ENCODE measurements at regions of chr5 and their contacts with region 1.

Region 1: DNA sequence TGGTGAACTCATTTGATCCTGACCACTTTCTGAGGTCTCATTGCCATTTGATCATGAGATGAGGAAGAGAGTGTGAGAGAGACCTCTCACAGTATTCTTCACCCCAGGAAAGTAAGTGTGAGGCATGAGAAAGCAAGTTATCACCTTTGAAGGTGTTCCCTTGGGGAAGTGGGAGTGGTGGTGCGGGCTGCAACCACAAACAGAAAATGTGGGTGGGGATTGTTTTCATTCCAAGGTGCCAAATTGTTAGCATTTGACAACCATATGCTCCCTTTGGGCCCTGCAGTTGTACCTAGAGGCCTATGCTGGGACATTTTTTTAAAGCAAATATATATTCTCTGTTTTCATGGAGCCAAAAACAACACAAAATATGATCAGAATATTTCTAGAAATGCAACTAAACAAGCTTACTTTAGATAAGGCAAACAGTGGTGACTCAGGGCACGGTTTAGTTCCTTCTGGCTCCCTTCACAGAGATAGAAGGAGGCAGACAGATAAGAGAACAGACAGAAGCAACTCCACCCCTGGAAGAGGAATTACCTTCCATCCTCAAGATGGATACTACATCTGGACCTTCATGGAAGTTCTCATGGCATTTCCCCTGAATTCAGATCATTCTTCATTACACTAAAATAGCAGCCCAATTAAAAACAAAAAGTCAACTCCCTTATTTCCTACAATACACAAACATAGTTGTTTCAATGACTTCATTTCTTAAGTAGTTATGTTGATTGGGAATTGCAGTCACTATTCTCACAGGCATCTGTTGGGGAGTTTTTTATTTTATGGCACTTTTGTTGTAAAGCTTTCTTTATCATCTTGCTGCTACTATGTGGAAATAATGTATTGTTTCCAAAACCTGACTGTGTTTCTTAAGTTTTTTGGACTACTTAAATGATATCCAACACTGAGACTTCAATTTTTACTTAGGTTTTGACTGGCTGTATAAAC is 416.6 kb downstream of the PLK2 start:
- DNase-seq: no peak
- ATAC-seq: no peak
- H3K4me3 ChIP-seq: no peak overlapping the region
- H3K4me3 Mint-ChIP-seq: no peak overlapping the region
- H3K27ac ChIP-seq: no peak overlapping the region
- H3K27ac Mint-ChIP-seq: no peak overlapping the region
- H3K4me1 ChIP-seq: no peaks in the 10 kb centered on the region
- H3K4me1 Mint-ChIP-seq: no peaks in the 10 kb centered on the region
- H3K27me3 ChIP-seq: no peaks in the 10 kb centered on the region
- H3K27me3 Mint-ChIP-seq: no peaks in the 10 kb centered on the region
- CTCF ChIP-seq: no peak

Region 2: GRCh38 chr5:56791396-56791795 is 1251.9 kb before region 1 on chr5:
- CTCF ChIA-PET with region 1: no interaction called
- POLR2A ChIA-PET with region 1: no interaction called
- intact Hi-C with region 1: no loop called
- DNase-seq: no peak
- ATAC-seq: no peak
- H3K4me3 ChIP-seq: no peak overlapping the region
- H3K4me3 Mint-ChIP-seq: no peak overlapping the region
- H3K27ac ChIP-seq: no peak overlapping the region
- H3K27ac Mint-ChIP-seq: no peak overlapping the region
- H3K4me1 ChIP-seq: no peaks in the 10 kb centered on the region
- H3K4me1 Mint-ChIP-seq: no peaks in the 10 kb centered on the region
- H3K27me3 ChIP-seq: no peaks in the 10 kb centered on the region
- H3K27me3 Mint-ChIP-seq: no peaks in the 10 kb centered on the region
- CTCF ChIP-seq: no peak

Region 3: GRCh38 chr5:58019614-58020013 is 23.7 kb before region 1 on chr5:
- CTCF ChIA-PET with region 1: no interaction called
- POLR2A ChIA-PET with region 1: no interaction called
- intact Hi-C with region 1: loop called in 1 of 2 experiments (anchors 1 kb)
- DNase-seq: no peak
- ATAC-seq: no peak
- H3K4me3 ChIP-seq: no peak overlapping the region
- H3K4me3 Mint-ChIP-seq: no peak overlapping the region
- H3K27ac ChIP-seq: no peak overlapping the region
- H3K27ac Mint-ChIP-seq: no peak overlapping the region
- H3K4me1 ChIP-seq: no peaks in the 10 kb centered on the region
- H3K4me1 Mint-ChIP-seq: no peaks in the 10 kb centered on the region
- H3K27me3 ChIP-seq: no peaks in the 10 kb centered on the region
- H3K27me3 Mint-ChIP-seq: no peaks in the 10 kb centered on the region
- CTCF ChIP-seq: no peak